ENCODE measurements at regions of chr22 and their contacts with region 1.

Region 1: DNA sequence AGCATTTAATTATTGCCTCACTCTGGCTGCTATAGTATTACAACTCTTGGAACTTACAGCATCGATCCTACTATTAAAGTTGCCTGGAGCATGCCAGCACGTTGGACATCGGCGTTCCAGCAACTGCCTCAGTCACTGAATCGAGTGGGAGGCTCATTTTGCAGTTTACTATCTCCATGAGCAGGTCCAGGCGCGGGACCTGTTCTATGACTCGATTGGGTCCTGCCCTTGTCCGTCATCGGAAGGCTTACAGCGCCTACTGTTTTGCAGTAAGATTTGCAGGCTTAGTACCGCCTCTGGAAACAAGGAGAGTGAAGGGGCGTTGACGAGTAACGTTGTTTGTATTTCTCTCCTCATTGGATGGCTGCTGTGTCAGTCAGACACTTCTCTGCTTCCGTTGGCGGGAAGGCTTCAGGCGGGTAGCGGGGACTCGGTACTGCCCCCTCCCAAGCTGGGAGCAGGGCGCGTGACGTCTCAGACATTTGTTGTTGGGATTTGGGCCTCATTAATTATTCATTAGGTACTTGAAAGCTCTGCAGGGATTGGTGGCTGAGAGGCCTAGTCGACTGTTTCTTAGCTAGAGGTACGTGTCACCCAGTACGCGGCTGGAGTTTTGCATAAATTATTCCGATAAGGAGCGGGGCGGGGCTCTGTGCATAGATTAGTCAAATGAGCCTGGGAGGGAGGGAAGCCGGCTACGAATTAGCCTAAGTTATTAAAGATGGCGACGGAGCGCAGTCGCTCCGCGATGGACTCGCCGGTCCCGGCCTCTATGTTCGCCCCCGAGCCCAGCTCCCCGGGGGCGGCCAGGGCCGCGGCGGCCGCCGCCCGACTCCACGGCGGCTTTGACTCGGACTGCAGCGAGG is at the start of gene GTPBP1:
- DNase-seq: peak; percentile 98 to 100
- H3K4me3 ChIP-seq: peak within 1 kb of the TSS; percentile 97
- H3K4me3 Mint-ChIP-seq: peak within 1 kb of the TSS; percentile 89
- H3K27ac Mint-ChIP-seq: peak within 1 kb of the TSS; percentile 88
- H3K4me1 ChIP-seq: peaks cover 13% of the 10 kb centered on the region
- H3K4me1 Mint-ChIP-seq: peaks cover 9% of the 10 kb centered on the region
- H3K27me3 ChIP-seq: no peaks in the 10 kb centered on the region
- H3K27me3 Mint-ChIP-seq: no peaks in the 10 kb centered on the region
- CTCF ChIP-seq: no peak
- total RNA-seq, gene GTPBP1: 47.2 and 48.0 TPM in 2 replicates

Region 2: DNA sequence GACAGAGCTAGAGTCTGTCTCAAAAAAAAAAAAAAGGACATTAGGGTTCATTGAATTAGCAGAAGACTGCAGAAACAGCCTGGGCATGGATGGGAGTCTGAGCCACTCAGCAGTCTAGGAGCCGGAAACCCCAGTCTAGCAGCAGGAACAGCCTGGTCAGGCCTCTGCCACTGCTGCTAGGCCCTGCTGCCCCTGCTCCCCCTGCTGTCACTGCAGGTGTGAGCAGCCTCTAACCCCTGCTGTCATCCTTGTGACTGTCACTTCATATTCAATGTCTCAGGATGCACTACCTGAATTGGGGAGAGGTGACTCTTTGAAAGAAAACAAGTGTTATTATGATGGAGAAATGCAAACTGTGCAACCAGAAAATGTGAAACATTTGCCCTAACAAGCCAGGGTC is 192.4 kb before region 1 on chr22:
- CTCF ChIA-PET with region 1: no interaction called
- POLR2A ChIA-PET with region 1: interaction called, 19 read pairs
- intact Hi-C with region 1: no loop called
- DNase-seq: peak in 1 of 2 experiments; percentile 62
- H3K4me3 ChIP-seq: no peak overlapping the region
- H3K4me3 Mint-ChIP-seq: no peak overlapping the region
- H3K27ac Mint-ChIP-seq: no peak overlapping the region
- H3K4me1 ChIP-seq: no peaks in the 10 kb centered on the region
- H3K4me1 Mint-ChIP-seq: peaks cover 13% of the 10 kb centered on the region
- H3K27me3 ChIP-seq: no peaks in the 10 kb centered on the region
- H3K27me3 Mint-ChIP-seq: no peaks in the 10 kb centered on the region
- CTCF ChIP-seq: peak in 1 of 2 experiments; percentile 65

Region 3: GRCh38 chr22:38631724-38632123 is 73.7 kb before region 1 on chr22:
- CTCF ChIA-PET with region 1: no interaction called
- POLR2A ChIA-PET with region 1: no interaction called
- intact Hi-C with region 1: no loop called
- DNase-seq: no peak
- H3K4me3 ChIP-seq: no peak overlapping the region
- H3K4me3 Mint-ChIP-seq: no peak overlapping the region
- H3K27ac Mint-ChIP-seq: no peak overlapping the region
- H3K4me1 ChIP-seq: peaks cover 5% of the 10 kb centered on the region; the same call in 1 of the 2 replicates
- H3K4me1 Mint-ChIP-seq: peaks cover 20% of the 10 kb centered on the region
- H3K27me3 ChIP-seq: no peaks in the 10 kb centered on the region
- H3K27me3 Mint-ChIP-seq: no peaks in the 10 kb centered on the region
- CTCF ChIP-seq: no peak

Region 4: DNA sequence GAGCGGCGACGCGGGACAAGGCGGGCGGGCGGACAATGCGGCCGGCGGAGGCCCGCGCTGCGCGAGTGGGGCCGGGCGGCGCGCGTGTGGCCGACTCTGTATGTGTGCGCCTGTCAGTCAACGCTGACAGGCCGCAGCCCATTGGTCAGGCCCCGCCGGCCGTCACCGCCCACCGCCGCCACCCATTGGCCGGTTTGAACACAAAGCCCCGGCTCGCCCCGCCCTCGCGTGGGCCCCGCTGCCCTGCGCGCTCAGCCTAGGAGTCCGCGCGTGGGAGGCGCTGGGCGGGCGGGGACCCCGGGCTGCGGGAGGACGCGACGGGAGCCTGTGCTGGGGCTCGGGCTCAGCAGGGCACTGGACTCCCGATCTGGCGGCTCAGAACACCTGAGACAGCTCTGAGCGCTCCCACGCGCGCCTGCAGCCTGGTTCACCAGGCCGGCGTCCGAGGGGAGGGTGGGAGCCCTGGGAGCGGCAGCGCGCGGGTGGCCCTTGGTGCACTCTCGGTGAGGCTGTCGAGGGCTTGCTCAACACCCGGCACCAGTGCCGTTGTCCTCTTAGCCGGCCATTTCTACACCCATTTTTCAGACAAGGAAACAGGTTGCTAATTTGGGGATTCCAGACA is 50.6 kb after region 1 on chr22 and contains the start of gene SUN2:
- CTCF ChIA-PET with region 1: no interaction called
- POLR2A ChIA-PET with region 1: no interaction called
- intact Hi-C with region 1: loop called (anchors 5 kb)
- DNase-seq: peak; percentile 85 to 91
- H3K4me3 ChIP-seq: peak within 1 kb of the TSS; percentile 94
- H3K4me3 Mint-ChIP-seq: peak within 1 kb of the TSS; percentile 77
- H3K27ac Mint-ChIP-seq: peak within 1 kb of the TSS; percentile 80
- H3K4me1 ChIP-seq: peaks cover 21% of the 10 kb centered on the region
- H3K4me1 Mint-ChIP-seq: peaks cover 13% of the 10 kb centered on the region
- H3K27me3 ChIP-seq: no peaks in the 10 kb centered on the region
- H3K27me3 Mint-ChIP-seq: no peaks in the 10 kb centered on the region
- CTCF ChIP-seq: no peak
- total RNA-seq, gene SUN2: 61.9 and 67.8 TPM in 2 replicates

Region 5: DNA sequence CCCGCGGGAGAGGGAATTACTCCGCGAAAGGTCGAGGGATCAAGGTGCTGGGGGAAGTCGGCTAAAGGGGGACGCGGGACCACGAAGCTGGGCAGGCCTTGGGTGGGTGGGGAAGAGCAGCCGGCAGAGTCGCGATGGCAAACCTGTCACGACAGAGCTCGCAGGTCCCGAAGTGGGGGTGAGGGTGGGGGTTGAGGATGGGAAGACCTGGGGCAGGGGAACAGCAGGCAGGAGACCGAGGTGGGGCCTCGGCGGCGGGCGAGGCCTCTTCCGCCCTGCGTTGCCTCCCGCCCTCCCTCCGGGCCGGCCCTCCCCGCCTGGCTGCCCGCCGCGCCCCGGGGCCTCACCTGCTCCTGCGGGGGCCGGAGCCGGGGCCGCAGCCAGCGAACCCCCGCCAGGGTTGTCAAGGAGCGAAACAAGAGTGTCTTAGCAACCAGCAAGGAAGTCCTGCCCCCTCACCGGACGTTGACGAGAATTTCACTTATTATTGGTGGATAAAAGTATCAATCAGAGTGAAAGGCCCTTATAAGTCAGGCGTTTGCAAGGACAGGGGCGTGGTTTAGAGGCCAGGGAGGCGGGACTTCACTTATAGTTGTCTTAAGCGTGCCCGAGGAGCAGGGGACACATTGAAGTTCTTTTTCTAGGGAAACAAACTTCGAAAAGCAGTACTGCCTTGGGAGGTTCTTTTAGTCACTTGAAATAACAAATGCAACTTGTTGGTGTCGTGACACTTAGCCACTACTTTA is 88.4 kb after region 1 on chr22 and contains the start of gene DNAL4:
- CTCF ChIA-PET with region 1: no interaction called
- POLR2A ChIA-PET with region 1: no interaction called
- intact Hi-C with region 1: no loop called
- DNase-seq: peak; percentile 94 to 95
- H3K4me3 ChIP-seq: peak within 1 kb of the TSS; percentile 90
- H3K4me3 Mint-ChIP-seq: peak within 1 kb of the TSS; percentile 85
- H3K27ac Mint-ChIP-seq: peak within 1 kb of the TSS; percentile 71
- H3K4me1 ChIP-seq: peaks cover 8% of the 10 kb centered on the region
- H3K4me1 Mint-ChIP-seq: no peaks in the 10 kb centered on the region
- H3K27me3 ChIP-seq: no peaks in the 10 kb centered on the region
- H3K27me3 Mint-ChIP-seq: peaks cover 21% of the 10 kb centered on the region
- CTCF ChIP-seq: no peak
- total RNA-seq, gene DNAL4: 8.1 and 9.2 TPM in 2 replicates

Measured in Caco-2 (cell line).